Activated B cell treated with CpG ODN at 0.5 μM for 24 hours (primary cell): ENCODE measurements at regions of chr18 and their contacts with region 1.

Region 1: DNA sequence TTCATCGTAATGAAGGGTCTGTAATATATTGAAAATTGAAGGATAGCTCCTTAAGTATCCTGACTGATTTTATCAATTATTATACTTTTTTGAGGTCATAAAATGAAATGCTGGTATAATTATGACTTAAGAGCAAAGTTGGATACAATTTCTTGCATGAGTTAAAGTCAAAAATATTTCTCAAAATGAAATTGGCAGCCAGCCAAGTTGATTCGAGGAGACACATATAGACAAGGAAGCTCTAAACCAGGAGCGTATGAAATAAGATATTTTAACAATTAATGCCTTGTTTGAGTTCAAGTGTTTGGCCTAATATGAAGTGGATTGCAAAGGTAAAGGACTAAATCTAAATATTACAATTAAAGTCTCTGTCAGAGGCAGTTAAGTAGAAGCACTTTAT is 260.4 kb upstream of the DSEL start:
- DNase-seq: no peak
- ATAC-seq: no peak
- H3K4me3 Mint-ChIP-seq: no peak overlapping the region
- H3K27ac Mint-ChIP-seq: no peak overlapping the region
- H3K4me1 Mint-ChIP-seq: no peaks in the 10 kb centered on the region
- H3K27me3 Mint-ChIP-seq: no peaks in the 10 kb centered on the region
- CTCF ChIP-seq: no peak

Region 2: GRCh38 chr18:67710639-67711038 is 66.3 kb before region 1 on chr18:
- CTCF ChIA-PET with region 1: no interaction called
- POLR2A ChIA-PET with region 1: no interaction called
- intact Hi-C with region 1: loop called (anchors 10 kb)
- DNase-seq: no peak
- ATAC-seq: no peak
- H3K4me3 Mint-ChIP-seq: no peak overlapping the region
- H3K27ac Mint-ChIP-seq: no peak overlapping the region
- H3K4me1 Mint-ChIP-seq: no peaks in the 10 kb centered on the region
- H3K27me3 Mint-ChIP-seq: no peaks in the 10 kb centered on the region
- CTCF ChIP-seq: no peak

Region 3: GRCh38 chr18:67913040-67913439 is 136.1 kb after region 1 on chr18:
- CTCF ChIA-PET with region 1: no interaction called
- POLR2A ChIA-PET with region 1: no interaction called
- intact Hi-C with region 1: no loop called
- DNase-seq: no peak
- ATAC-seq: no peak
- H3K4me3 Mint-ChIP-seq: no peak overlapping the region
- H3K27ac Mint-ChIP-seq: no peak overlapping the region
- H3K4me1 Mint-ChIP-seq: no peaks in the 10 kb centered on the region
- H3K27me3 Mint-ChIP-seq: no peaks in the 10 kb centered on the region
- CTCF ChIP-seq: no peak